ENCODE measurements at regions of chr1 and their contacts with region 1.

Region 1: GRCh38 chr1:115062542-115063011 is 26.7 kb downstream of the TSPAN2 start:
- DNase-seq: peak; percentile 87 to 97
- ATAC-seq: peak; percentile 90 to 99 (median 98)
- H3K4me3 ChIP-seq: no peak overlapping the region
- H3K4me3 Mint-ChIP-seq: peak overlapping the region; percentile 76
- H3K27ac ChIP-seq: peak overlapping the region; percentile 72
- H3K27ac Mint-ChIP-seq: peak overlapping the region; percentile 88 to 98
- H3K4me1 ChIP-seq: peaks cover 24% of the 10 kb centered on the region
- H3K4me1 Mint-ChIP-seq: peaks cover 51 to 62% of the 10 kb centered on the region in 2 donors
- H3K27me3 ChIP-seq: no peaks in the 10 kb centered on the region
- H3K27me3 Mint-ChIP-seq: no peaks in the 10 kb centered on the region
- CTCF ChIP-seq: no peak

Region 2: GRCh38 chr1:115089420-115090185 is 27.0 kb after region 1 on chr1 and contains the start of gene TSPAN2:
- intact Hi-C with region 1: loop called (anchors 1 kb)
- DNase-seq: peak; percentile 54 to 73
- ATAC-seq: peak; percentile 72 to 81 (median 75)
- H3K4me3 ChIP-seq: peak within 1 kb of the TSS; percentile 76
- H3K4me3 Mint-ChIP-seq: peak within 1 kb of the TSS; percentile 88
- H3K27ac ChIP-seq: peak within 1 kb of the TSS; percentile 68
- H3K27ac Mint-ChIP-seq: peak within 1 kb of the TSS; percentile 80 to 85
- H3K4me1 ChIP-seq: peaks cover 48% of the 10 kb centered on the region
- H3K4me1 Mint-ChIP-seq: peaks cover 62 to 65% of the 10 kb centered on the region in 2 donors
- H3K27me3 ChIP-seq: no peaks in the 10 kb centered on the region
- H3K27me3 Mint-ChIP-seq: no peaks in the 10 kb centered on the region
- CTCF ChIP-seq: no peak
- total RNA-seq, gene TSPAN2: 17.1 to 41.4 (median 28.6) TPM

Region 3: GRCh38 chr1:115098979-115099692 is 36.6 kb after region 1 on chr1:
- intact Hi-C with region 1: loop called (anchors 1 kb)
- DNase-seq: peak; percentile 57 to 94
- ATAC-seq: peak; percentile 88 to 95 (median 93)
- H3K4me3 ChIP-seq: peak overlapping the region; percentile 65
- H3K4me3 Mint-ChIP-seq: peak overlapping the region; percentile 93
- H3K27ac ChIP-seq: peak overlapping the region; percentile 95
- H3K27ac Mint-ChIP-seq: peak overlapping the region; percentile 99
- H3K4me1 ChIP-seq: peaks cover 20% of the 10 kb centered on the region
- H3K4me1 Mint-ChIP-seq: peaks cover 34 to 44% of the 10 kb centered on the region in 2 donors
- H3K27me3 ChIP-seq: no peaks in the 10 kb centered on the region
- H3K27me3 Mint-ChIP-seq: no peaks in the 10 kb centered on the region
- CTCF ChIP-seq: no peak

Region 4: DNA sequence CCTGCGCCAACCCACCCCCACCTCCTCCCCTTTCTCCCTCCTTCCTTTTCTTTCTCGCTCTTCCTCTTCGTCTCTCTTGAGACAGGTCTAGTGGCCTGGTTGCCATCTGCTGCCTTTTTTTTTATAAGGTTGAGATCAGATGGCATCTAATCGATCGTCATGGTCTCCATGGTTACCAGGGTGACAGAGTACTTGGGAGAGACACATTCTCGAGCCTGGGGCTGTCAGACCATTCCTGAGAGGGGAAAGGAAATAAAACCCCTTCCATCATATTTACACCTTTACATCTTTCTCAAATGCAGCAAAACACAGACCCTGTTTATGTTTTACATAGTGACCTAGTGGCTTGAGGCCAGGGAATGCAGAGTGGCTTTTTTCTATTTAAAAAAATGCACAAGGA is 860.2 kb after region 1 on chr1:
- intact Hi-C with region 1: no loop called
- DNase-seq: no peak
- ATAC-seq: no peak
- H3K4me3 ChIP-seq: no peak overlapping the region
- H3K4me3 Mint-ChIP-seq: no peak overlapping the region
- H3K27ac ChIP-seq: no peak overlapping the region
- H3K27ac Mint-ChIP-seq: no peak overlapping the region
- H3K4me1 ChIP-seq: no peaks in the 10 kb centered on the region
- H3K4me1 Mint-ChIP-seq: no peaks in the 10 kb centered on the region
- H3K27me3 ChIP-seq: no peaks in the 10 kb centered on the region
- H3K27me3 Mint-ChIP-seq: peaks cover 0 to 23% of the 10 kb centered on the region in 2 donors
- CTCF ChIP-seq: no peak

Measured in natural killer cell (primary cell).